Vagina (tissue), 2 donors: ENCODE measurements at regions of chr7 and their contacts with region 1.

Region 1: DNA sequence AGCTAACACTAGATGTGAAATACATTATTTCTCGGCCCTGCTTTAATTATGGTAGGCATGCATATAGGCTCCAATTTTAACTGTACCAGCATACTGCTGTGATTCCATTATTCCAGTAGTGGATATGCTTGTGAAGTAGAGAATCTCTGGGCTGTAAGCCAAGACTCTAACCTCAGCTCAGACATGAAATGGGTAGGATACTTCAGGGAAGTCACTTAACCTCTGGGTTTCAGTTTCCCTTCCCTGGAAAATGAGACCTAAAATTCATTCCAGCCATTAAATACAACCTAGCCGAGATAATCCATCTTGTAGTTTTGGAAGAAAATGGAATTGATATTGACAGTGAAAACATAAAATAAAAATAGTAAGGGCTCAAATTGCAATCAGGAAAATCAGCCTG is 59.6 kb upstream of the TRIL start:
- DNase-seq: no peak
- H3K4me3 ChIP-seq: no peak overlapping the region
- H3K27ac ChIP-seq: no peak overlapping the region
- H3K4me1 ChIP-seq: peaks cover 7% of the 10 kb centered on the region
- H3K27me3 ChIP-seq: no peaks in the 10 kb centered on the region
- CTCF ChIP-seq: no peak
- POLR2A ChIP-seq: no peak

Region 2: DNA sequence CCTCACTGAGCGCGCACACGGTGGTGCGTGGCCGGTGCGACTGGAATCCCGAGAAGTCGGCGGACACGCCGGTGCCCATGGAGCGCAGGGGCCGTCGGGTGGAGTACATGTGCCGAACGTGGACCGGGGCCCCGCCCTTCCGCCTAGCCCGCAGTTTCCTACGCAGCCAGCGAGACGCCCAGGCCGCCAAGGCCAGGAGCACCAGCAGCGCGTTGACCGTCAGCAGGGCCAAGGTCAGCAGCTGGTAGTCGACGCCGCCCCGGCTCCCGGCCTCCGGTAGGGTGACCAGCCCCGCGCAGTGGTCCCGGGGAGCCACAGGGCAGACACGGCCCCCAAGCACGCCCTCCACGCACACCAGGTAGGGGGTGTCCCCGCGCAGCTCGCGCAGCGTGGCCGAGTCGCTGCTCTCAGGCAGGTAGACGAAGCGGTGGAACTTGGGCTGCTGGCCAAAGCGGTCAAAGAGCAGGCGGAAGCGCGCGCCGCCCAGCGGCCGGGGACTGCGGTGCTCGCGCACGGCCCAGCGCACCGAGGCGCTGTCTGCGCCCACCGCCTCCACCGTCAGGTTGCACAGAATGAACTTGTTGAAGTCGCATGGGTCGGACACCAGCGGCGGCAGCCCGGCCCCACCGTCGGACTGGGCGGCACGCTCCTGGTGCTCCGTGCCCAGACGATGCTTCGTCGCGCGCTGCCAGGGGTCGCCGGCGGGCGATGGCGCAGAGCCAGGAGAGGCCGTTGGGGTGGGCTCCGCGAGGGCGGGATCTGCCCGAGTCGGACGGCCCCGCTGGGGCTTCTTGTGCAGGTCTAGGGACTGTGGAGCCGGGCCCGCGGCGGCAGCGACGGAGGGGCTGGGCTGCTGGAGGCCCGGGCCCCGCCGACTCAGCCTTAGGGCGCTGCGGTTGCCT is 61.7 kb before region 1 on chr7:
- intact Hi-C with region 1: loop called (anchors 10 kb)
- DNase-seq: peak in 1 of 2 donors; percentile 86
- H3K4me3 ChIP-seq: peak overlapping the region; percentile 53 to 58
- H3K27ac ChIP-seq: peak overlapping the region; percentile 84
- H3K4me1 ChIP-seq: peaks cover 56% of the 10 kb centered on the region
- H3K27me3 ChIP-seq: no peaks in the 10 kb centered on the region
- CTCF ChIP-seq: peak; percentile 1 to 57 (median 49)
- POLR2A ChIP-seq: no peak